AG04450 (cell line): ENCODE measurements at regions of chr18 and their contacts with region 1.

Region 1: DNA sequence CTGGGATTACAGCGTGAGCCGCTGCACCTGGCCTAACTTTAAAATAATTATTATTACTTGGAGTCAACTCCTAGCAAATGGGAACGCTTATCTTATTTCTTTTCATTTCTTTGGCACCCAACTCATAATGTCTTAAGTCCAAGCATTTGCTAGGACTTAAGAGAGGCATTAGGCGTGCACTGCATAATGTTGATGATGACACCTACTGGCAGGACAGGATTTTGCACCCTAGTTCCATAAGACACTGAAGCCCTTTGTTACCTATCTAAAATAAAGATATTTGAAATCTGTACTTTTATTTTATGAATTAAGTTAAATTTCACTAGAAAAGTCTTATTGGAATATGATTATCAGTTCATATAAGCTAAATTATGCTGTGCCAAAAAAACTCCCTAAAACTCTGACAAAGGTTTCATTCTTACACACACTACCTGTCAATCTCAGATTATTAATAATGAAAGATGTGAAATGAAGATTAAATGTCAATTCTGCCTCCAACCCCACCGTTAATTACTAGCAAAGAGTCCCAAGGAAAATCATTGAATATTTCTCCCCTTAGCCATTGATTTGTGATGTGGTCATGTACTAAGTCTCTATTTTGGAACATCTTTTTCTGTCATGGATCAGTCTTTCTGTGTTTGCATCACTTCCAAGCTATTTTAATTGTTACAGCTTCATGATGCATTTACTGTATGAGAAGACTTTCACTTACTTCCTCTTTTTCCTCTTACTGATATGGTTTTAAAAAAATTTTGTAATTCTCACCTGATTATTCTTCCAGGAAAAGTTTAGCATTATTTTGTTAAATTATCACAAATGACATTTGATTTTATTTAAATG is 12.7 kb upstream of the CDH2 start:
- DNase-seq: peak; percentile 56
- H3K4me3 ChIP-seq: no peak overlapping the region
- H3K27ac ChIP-seq: no peak overlapping the region
- H3K27me3 ChIP-seq: no peaks in the 10 kb centered on the region
- CTCF ChIP-seq: peak; percentile 92

Region 2: DNA sequence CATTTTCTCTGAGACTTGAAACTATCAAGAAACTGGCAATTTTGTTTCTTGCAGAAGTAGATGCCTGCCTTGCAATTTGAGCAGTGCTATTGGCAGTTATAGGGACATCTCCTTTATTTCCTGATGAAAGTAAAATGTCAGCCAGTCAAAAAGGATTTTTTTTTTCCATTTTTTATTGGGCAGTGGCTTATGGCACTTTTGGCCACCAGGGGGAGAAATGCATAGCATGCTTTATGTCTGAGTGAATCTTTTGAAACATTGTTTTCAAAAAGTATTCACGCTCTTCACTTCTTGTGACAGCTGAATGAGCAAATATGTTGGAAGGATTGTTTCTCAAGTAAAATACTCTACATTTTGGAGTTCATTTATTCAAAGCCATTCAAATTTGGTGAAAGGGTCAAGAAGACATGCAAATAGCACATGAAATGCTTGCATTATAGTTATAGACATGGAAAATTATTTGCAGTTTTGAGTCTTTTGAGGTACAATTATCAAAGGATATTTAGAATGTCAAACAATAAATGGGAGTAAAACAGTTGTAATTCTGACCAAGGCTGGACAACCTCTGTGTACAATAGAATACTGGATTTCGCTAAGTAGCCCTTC is 503.7 kb before region 1 on chr18:
- CTCF ChIA-PET with region 1: interaction called, 16 read pairs
- POLR2A ChIA-PET with region 1: no interaction called
- DNase-seq: peak; percentile 6
- H3K4me3 ChIP-seq: no peak overlapping the region
- H3K27ac ChIP-seq: no peak overlapping the region
- H3K27me3 ChIP-seq: no peaks in the 10 kb centered on the region
- CTCF ChIP-seq: peak; percentile 84

Region 3: GRCh38 chr18:27942701-27943100 is 246.9 kb before region 1 on chr18:
- CTCF ChIA-PET with region 1: no interaction called
- POLR2A ChIA-PET with region 1: no interaction called
- DNase-seq: no peak
- H3K4me3 ChIP-seq: no peak overlapping the region
- H3K27ac ChIP-seq: no peak overlapping the region
- H3K27me3 ChIP-seq: no peaks in the 10 kb centered on the region
- CTCF ChIP-seq: no peak

Region 4: GRCh38 chr18:28136071-28136470 is 53.5 kb before region 1 on chr18:
- CTCF ChIA-PET with region 1: no interaction called
- POLR2A ChIA-PET with region 1: no interaction called
- DNase-seq: no peak
- H3K4me3 ChIP-seq: no peak overlapping the region
- H3K27ac ChIP-seq: no peak overlapping the region
- H3K27me3 ChIP-seq: no peaks in the 10 kb centered on the region
- CTCF ChIP-seq: no peak